ENCODE measurements at regions of chr11 and their contacts with region 1.

Region 1: GRCh38 chr11:117107701-117108590 is 9.7 kb upstream of the SIK3 start:
- DNase-seq: no peak
- ATAC-seq: no peak

Region 2: GRCh38 chr11:116879800-116880625 is 227.9 kb before region 1 on chr11:
- intact Hi-C with region 1: loop called (anchors 5 kb)
- DNase-seq: no peak
- ATAC-seq: peak; percentile 81

Region 3: GRCh38 chr11:116895048-116895757 is 212.7 kb before region 1 on chr11:
- intact Hi-C with region 1: no loop called
- DNase-seq: peak; percentile 56
- ATAC-seq: peak; percentile 68

Region 4: GRCh38 chr11:117171404-117172061 is 63.6 kb after region 1 on chr11:
- intact Hi-C with region 1: no loop called
- DNase-seq: no peak
- ATAC-seq: peak; percentile 47

Region 5: DNA sequence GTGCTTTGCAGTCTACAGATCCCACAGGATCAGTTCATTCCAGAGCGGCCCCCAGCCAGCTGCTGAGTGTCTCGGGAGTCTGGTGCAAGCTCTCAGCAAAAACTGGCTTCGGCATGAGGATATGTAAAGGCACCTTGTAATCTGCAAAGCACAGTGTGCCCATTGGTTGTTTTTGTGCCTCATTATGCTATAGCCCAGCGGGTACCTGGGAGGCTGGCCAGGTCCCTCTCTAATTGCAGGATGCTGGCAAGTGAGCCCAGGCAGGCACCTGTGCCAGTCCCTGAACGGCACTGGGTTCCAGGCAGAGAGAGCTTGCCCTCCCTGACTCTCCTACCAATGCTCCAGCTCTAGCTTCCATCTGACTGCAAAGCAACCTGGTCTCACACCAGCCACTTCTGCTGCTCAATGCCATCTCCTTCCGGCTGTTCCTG is 560.4 kb after region 1 on chr11:
- intact Hi-C with region 1: no loop called
- DNase-seq: no peak
- ATAC-seq: no peak

Region 6: DNA sequence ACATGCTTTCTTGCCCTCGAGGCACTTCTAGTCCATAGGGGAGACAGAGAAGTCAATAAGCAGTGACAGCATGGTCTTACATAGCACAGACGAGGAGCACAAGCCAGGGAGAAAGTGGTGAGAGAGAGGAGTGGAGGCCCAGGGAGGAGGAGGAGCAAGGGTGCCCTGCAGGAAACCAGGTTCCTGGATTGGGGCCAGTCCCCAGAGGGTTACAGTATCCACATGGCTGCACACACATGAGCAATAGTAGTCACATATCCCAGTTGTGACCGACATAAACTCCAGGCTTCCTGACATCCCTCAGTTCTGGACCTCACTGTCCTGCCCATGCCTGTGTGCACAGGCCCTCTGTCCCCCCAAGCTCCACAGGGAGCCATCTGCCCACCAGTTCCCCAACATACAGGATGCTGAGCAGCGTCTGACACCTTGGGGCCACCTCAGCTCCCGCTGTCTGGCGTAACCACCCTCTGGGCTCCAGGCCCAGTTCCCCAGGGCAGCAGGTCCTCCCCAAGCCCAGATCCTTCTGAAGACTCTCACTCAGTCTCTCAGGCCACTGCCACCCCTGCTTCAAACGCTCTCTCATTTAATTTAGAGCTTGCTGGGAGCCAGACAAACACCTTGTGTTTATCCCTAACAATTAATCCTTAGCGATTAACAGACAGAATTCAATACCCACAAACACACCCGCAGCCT is 635.3 kb after region 1 on chr11:
- intact Hi-C with region 1: no loop called
- DNase-seq: no peak
- ATAC-seq: no peak

Measured in left ventricle myocardium superior (tissue), 1 donor.